ENCODE measurements at regions of chr2 and their contacts with region 1.

Region 1: DNA sequence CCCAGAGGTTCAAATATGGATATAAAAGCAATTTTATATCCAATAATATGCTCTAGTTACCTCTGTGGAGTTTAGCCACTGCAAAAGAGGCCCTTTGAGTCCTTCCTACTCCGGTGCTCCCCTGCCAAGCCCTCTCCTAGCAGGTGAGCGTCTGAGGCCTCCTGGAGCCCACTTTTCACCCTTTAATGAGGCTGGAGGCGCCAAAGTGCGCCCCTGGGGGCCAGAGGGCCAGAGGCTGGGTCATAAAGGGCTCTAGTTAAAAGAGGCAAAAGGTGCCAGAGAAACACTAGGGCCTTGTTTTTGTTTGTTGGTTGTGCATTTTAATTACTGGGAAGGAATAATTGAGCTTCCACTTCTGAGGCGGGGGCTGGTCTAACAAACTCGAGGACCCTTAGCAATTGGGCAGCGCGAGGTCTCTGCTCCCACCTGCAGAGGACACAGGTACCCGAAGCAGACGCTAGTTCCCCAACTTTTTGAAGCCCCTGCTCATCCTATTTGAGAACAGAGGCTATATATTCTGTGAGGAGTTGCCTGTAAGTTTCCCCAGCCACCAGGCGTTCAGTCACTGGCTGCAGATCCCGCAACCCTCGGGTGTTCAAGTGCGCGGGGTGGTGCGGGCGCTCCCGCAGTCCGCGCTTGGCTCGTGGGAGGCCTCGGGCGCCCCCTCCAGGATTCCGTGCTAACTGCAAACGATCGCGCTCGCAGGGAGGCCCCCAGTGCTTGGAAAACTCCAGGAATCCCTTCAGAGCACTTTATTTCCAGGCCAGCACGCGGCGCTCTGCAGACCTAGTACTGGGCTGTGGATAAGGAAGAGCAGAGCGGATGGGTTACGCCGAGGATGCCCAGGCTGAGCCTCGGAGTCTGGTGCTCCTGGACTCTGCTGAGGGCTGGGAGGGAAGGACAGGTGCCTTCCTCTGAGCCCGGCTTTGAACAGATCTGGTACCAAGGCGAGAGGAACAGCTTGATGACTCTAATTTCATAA is 14.1 kb downstream of the MSGN1 start:
- DNase-seq: peak; percentile 22 to 59
- ATAC-seq: peak; percentile 79 to 93
- H3K4me3 ChIP-seq: peak overlapping the region; percentile 24 to 41 (median 32)
- H3K27ac ChIP-seq: no peak overlapping the region
- H3K4me1 ChIP-seq: no peaks in the 10 kb centered on the region
- H3K27me3 ChIP-seq: no peaks in the 10 kb centered on the region
- CTCF ChIP-seq: peak; percentile 78 to 96 (median 86)
- POLR2A ChIP-seq: no peak

Region 2: DNA sequence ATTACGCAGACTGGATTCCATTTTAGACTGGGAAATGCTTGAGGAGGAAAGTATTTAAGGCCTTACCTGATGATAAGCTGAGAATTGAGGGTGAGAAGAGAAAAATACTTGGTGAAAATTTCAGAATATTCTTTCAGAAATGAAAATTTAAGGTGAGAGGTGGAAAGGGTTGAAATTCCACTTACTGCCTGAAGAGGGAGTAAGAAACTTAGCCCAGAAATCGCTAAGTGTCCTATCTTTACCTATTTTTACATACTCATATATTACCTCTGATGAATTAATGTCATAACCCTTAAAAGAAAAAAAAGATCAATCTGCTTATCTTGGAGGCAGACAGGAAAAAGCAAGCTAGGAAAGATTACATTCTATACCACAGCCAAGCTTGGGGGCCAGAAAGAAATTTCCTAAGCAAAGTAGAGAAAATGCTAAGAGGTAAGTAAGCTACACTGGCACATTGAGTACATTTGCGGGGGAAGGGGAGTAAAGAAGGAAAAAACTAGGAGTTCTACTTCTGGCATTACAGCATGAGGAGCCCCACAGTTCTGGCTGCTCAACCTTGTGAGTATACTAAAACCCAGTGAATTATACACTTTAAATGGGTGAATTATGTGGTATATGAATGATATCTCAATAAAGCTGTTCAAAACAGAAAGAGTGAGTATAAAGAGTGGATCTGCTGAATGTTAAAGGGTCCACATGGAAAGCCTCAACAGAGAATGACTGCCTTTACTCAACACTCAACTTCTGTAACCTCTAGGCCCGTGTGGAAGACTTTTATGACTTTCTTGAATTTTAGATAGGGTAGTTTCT is 110.6 kb before region 1 on chr2:
- in situ Hi-C with region 1: loop called in 2 of 4 experiments (anchors 5 to 10 kb)
- intact Hi-C with region 1: loop called (anchors 1 kb)
- DNase-seq: no peak
- ATAC-seq: no peak
- H3K4me3 ChIP-seq: no peak overlapping the region
- H3K27ac ChIP-seq: no peak overlapping the region
- H3K4me1 ChIP-seq: no peaks in the 10 kb centered on the region
- H3K27me3 ChIP-seq: no peaks in the 10 kb centered on the region
- CTCF ChIP-seq: peak; percentile 56 to 80 (median 67)
- POLR2A ChIP-seq: no peak

Region 3: GRCh38 chr2:17753803-17754663 is 76.3 kb before region 1 on chr2 and contains the starts of genes GEN1 and SMC6:
- in situ Hi-C with region 1: loop called in 1 of 4 experiments (anchors 25 kb)
- intact Hi-C with region 1: loop called (anchors 2 kb)
- DNase-seq: peak; percentile 76 to 83
- ATAC-seq: peak; percentile 97
- H3K4me3 ChIP-seq: peak within 1 kb of the TSS; percentile 87 to 95 (median 90)
- H3K27ac ChIP-seq: peak within 1 kb of the TSS; percentile 97 to 99 (median 98)
- H3K4me1 ChIP-seq: peaks cover 29 to 31% of the 10 kb centered on the region in 2 donors
- H3K27me3 ChIP-seq: no peaks in the 10 kb centered on the region
- CTCF ChIP-seq: no peak
- POLR2A ChIP-seq: no peak
- total RNA-seq, gene GEN1: 0.31 to 8.7 (median 2.3) TPM
- total RNA-seq, gene SMC6: 7.5 to 11.0 (median 9.6) TPM

Region 4: DNA sequence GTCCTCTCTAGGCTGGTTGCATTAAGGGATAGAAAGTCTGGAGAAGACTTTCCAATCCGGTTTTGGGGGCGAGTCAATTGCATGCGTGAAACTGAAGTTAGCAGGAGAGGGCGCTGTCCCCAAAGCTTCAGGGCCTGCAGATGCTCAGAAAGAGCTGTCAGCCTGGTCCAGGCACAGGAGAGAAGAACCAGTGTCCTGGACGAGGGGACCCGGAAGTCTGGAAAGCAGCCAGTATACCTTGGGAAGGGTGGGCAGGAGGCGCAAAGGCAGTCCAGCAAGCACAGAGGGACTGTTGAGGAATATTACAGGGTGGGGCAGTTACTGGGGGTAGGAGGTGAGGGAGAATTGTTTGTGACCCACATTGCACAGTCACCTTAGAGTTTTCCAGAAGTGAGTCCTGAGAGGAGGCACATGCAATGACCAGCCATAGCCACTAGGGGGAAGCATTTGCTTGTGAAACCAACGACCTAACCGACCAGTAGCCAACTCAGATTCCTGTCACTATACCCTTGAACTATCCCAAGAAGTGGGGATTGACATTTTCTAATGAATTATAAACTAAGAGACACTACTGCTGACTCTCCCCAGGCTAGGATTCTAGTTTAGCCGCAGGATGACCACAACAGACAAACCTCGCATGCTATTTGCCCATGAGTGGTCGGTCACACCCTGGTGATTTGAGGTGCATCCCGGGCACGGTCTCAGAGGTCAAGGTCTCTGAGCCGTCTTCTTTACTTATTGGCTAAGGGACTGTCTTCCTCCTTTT is 557.3 kb after region 1 on chr2:
- in situ Hi-C with region 1: loop called in 1 of 4 experiments (anchors 25 kb)
- intact Hi-C with region 1: no loop called
- DNase-seq: peak; percentile 44 to 61
- ATAC-seq: peak; percentile 93 to 94
- H3K4me3 ChIP-seq: no peak overlapping the region
- H3K27ac ChIP-seq: no peak overlapping the region
- H3K4me1 ChIP-seq: no peaks in the 10 kb centered on the region
- H3K27me3 ChIP-seq: no peaks in the 10 kb centered on the region
- CTCF ChIP-seq: peak; percentile 72 to 94 (median 87)
- POLR2A ChIP-seq: no peak

Measured in gastrocnemius medialis (tissue), 4 donors.